ENCODE measurements at regions of chr20 and their contacts with region 1.

Region 1: DNA sequence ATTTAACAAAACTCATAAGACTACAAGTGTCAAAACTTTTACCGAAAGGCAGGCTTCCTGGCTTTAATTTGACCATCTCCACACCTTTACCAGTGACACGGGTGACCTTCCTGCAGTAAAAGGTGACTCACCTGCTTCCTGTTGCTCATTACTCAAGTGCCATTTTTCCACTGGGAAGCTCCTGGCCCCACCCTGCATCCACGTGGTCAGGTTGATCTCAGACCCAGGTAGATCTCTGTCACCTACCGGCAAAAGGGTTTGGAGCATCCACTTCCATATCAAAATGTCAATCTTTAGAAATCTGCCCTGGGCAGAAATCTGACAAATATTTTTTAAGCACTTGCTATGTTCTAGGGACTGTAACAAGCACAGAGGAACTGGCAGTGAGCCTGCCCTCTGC is 31.9 kb upstream of the CDH4 start:
- DNase-seq: no peak
- ATAC-seq: no peak
- H3K4me3 ChIP-seq: no peak overlapping the region
- H3K4me3 Mint-ChIP-seq: no peak overlapping the region
- H3K27ac ChIP-seq: no peak overlapping the region
- H3K27ac Mint-ChIP-seq: no peak overlapping the region
- H3K4me1 ChIP-seq: no peaks in the 10 kb centered on the region
- H3K4me1 Mint-ChIP-seq: no peaks in the 10 kb centered on the region
- H3K27me3 ChIP-seq: no peaks in the 10 kb centered on the region
- H3K27me3 Mint-ChIP-seq: peaks cover 8 to 10% of the 10 kb centered on the region in 2 donors
- CTCF ChIP-seq: no peak

Region 2: GRCh38 chr20:59948828-59949720 is 1271.1 kb before region 1 on chr20:
- intact Hi-C with region 1: loop called (anchors 5 kb)
- DNase-seq: peak in 1 of 2 donors; percentile 83
- ATAC-seq: peak; percentile 73 to 90 (median 79)
- H3K4me3 ChIP-seq: no peak overlapping the region
- H3K4me3 Mint-ChIP-seq: peak overlapping the region; percentile 81
- H3K27ac ChIP-seq: peak overlapping the region; percentile 66
- H3K27ac Mint-ChIP-seq: peak overlapping the region; percentile 76 to 92
- H3K4me1 ChIP-seq: peaks cover 3% of the 10 kb centered on the region
- H3K4me1 Mint-ChIP-seq: peaks cover 11 to 16% of the 10 kb centered on the region in 2 donors
- H3K27me3 ChIP-seq: no peaks in the 10 kb centered on the region
- H3K27me3 Mint-ChIP-seq: no peaks in the 10 kb centered on the region
- CTCF ChIP-seq: peak; percentile 81

Region 3: DNA sequence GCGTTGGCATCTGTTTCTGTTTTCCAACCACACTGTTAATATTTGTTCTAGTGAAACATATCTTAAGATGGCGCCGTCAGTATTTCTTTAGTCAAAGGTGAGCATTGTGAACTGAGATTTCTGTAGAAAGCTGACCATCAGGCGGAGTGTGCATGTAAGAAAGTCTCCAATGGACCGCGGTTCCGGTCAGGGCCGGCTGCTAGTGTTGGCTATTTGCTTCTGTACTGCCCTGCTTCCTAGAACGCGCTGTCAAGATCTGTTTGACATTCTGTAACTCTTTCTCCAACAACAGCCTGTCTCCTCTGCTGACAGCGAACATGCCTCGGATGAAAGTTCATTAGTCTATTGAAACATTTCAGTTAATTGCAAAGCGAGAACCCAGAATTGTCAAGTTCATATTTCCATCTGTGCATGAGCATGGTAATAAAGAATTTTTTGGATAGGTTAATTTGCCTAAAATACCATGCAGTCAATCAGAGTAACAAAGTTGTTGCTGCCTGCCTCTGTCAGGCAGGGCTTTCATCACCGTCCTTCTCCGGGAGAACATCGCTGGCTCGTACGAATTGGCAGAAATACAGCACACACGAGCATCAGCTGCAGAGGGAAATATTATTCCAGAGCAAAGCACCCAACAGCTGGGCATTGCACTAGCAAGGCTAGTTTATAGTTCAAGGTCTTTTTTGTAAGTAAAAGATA is 401.0 kb after region 1 on chr20:
- intact Hi-C with region 1: no loop called
- DNase-seq: no peak
- ATAC-seq: no peak
- H3K4me3 ChIP-seq: no peak overlapping the region
- H3K4me3 Mint-ChIP-seq: no peak overlapping the region
- H3K27ac ChIP-seq: no peak overlapping the region
- H3K27ac Mint-ChIP-seq: no peak overlapping the region
- H3K4me1 ChIP-seq: no peaks in the 10 kb centered on the region
- H3K4me1 Mint-ChIP-seq: no peaks in the 10 kb centered on the region
- H3K27me3 ChIP-seq: no peaks in the 10 kb centered on the region
- H3K27me3 Mint-ChIP-seq: no peaks in the 10 kb centered on the region
- CTCF ChIP-seq: no peak

Measured in natural killer cell (primary cell).